CD14-positive monocyte (primary cell): ENCODE measurements at regions of chr2 and their contacts with region 1.

Region 1: GRCh38 chr2:16713011-16713423 is 47.4 kb upstream of the CYRIA start:
- DNase-seq: no peak
- H3K4me3 ChIP-seq: no peak overlapping the region
- H3K4me3 Mint-ChIP-seq: no peak overlapping the region
- H3K27ac ChIP-seq: no peak overlapping the region
- H3K27ac Mint-ChIP-seq: no peak overlapping the region
- H3K4me1 ChIP-seq: peaks cover 40 to 44% of the 10 kb centered on the region in 2 donors
- H3K4me1 Mint-ChIP-seq: peaks cover 34% of the 10 kb centered on the region
- H3K27me3 ChIP-seq: no peaks in the 10 kb centered on the region
- H3K27me3 Mint-ChIP-seq: peaks cover 0 to 2% (median 1%) of the 10 kb centered on the region in 3 donors
- CTCF ChIP-seq: no peak

Region 2: DNA sequence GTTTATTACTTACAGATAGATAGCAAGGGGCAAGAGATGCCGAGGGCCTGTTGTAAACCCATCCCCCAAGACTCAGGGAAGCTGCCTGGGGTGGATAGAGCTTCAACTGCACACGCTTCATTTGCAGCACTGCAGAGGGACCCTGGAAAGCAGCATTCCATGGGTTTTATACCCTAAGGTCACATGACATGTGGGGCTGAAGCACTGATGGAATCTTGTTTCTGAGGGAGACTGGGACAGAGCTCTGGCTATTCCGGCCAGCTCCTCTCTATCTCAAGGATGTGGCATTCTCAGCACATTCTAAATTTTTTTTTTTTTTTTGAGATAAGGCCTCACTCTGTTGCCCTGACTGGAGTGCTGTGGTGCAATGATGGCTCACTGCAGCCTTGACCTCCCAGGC is 472.6 kb before region 1 on chr2:
- intact Hi-C with region 1: no loop called
- DNase-seq: no peak
- H3K4me3 ChIP-seq: no peak overlapping the region
- H3K4me3 Mint-ChIP-seq: no peak overlapping the region
- H3K27ac ChIP-seq: no peak overlapping the region
- H3K27ac Mint-ChIP-seq: no peak overlapping the region
- H3K4me1 ChIP-seq: no peaks in the 10 kb centered on the region
- H3K4me1 Mint-ChIP-seq: no peaks in the 10 kb centered on the region
- H3K27me3 ChIP-seq: no peaks in the 10 kb centered on the region
- H3K27me3 Mint-ChIP-seq: peaks cover 0 to 5% (median 4%) of the 10 kb centered on the region in 3 donors
- CTCF ChIP-seq: no peak

Region 3: DNA sequence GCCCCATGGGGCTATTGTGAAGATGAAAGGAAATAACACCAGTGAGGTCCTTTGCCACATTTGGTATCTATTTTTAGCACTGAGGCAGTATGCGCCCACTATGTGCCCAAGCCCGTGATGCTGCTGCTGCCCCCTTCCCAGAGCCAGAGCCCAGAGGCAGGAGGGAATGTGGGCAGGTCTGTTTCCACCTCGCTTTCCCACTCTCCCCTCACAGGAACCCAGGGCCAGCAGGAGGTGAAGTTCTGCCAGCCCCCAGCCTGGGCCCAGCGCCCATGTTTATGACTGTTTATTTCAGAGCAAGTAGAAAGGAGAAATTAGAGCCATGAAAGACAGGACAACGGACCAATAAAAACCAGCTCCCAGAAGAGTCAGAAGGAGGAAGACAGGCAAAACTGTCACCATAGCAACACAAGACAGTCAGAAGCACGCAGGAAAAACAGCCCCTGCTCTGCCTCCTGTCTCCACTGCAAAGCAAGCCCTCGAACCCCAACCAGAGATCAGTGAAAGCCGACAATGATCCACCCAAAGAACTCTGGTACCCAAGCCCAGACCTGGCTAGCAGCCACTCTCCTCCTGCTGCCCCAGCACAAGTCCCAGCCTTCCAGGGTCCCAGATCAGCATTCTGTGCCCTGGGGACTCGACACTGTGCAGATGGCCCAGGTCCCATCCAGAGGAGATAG is 48.8 kb before region 1 on chr2:
- intact Hi-C with region 1: loop called in 1 of 2 experiments (anchors 5 kb)
- DNase-seq: peak; percentile 87 to 95 (median 94)
- H3K4me3 ChIP-seq: peak overlapping the region; percentile 70 to 89 (median 84)
- H3K4me3 Mint-ChIP-seq: peak overlapping the region; percentile 98 to 99
- H3K27ac ChIP-seq: peak overlapping the region; percentile 90
- H3K27ac Mint-ChIP-seq: peak overlapping the region; percentile 95 to 99 (median 97)
- H3K4me1 ChIP-seq: peaks cover 54 to 66% of the 10 kb centered on the region in 2 donors
- H3K4me1 Mint-ChIP-seq: peaks cover 65% of the 10 kb centered on the region
- H3K27me3 ChIP-seq: no peaks in the 10 kb centered on the region
- H3K27me3 Mint-ChIP-seq: peaks cover 5 to 9% (median 6%) of the 10 kb centered on the region in 3 donors
- CTCF ChIP-seq: no peak

Region 4: DNA sequence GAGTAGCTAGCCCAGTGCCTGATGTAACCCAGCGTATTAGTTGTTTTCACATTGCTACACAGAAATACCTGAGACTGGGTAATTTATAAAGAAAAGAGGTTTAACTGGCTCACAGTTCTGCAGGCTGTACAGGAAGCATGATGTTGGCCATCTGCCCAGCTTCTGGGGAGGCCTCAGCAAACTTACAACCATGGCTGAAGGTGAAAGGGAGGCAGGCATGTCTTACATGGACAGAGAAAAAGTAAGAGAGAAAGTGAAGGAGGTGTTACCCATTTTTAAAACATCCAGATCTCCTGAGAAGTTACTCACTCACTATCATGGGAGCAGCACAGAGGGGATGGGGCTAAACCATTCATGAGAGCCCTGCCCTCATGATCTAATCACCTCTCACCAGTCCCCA is 41.3 kb before region 1 on chr2:
- intact Hi-C with region 1: loop called in 1 of 2 experiments (anchors 5 kb)
- DNase-seq: no peak
- H3K4me3 ChIP-seq: no peak overlapping the region
- H3K4me3 Mint-ChIP-seq: no peak overlapping the region
- H3K27ac ChIP-seq: no peak overlapping the region
- H3K27ac Mint-ChIP-seq: peak overlapping the region in 1 of 7 donors; percentile 69
- H3K4me1 ChIP-seq: peaks cover 10 to 18% of the 10 kb centered on the region in 2 donors
- H3K4me1 Mint-ChIP-seq: peaks cover 17% of the 10 kb centered on the region
- H3K27me3 ChIP-seq: no peaks in the 10 kb centered on the region
- H3K27me3 Mint-ChIP-seq: peaks cover 3 to 7% (median 5%) of the 10 kb centered on the region in 3 donors
- CTCF ChIP-seq: no peak

Region 5: DNA sequence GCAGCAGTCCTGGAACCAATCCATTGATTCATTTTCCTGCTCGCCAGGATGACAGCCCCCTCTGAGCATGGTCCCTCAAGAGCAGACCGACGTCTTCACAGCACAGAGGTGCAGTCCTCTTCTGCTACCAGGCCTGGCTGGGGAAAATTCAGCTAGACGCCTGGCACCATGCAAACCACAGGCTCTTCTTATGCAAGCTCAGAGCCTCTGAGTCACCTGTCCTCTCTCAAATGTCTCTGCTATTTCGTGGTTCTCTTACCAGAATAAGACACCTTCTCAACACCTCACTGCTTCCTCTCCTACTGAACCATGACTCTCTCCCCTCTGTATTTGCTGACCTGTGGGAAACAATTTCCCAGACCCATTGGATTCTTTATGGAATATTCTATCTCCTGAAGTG is 32.4 kb after region 1 on chr2:
- intact Hi-C with region 1: no loop called
- DNase-seq: peak in 2 of 3 donors; percentile 12 to 24
- H3K4me3 ChIP-seq: no peak overlapping the region
- H3K4me3 Mint-ChIP-seq: no peak overlapping the region
- H3K27ac ChIP-seq: no peak overlapping the region
- H3K27ac Mint-ChIP-seq: peak overlapping the region in 1 of 7 donors; percentile 1
- H3K4me1 ChIP-seq: peaks cover 2 to 4% of the 10 kb centered on the region in 2 donors
- H3K4me1 Mint-ChIP-seq: peaks cover 17% of the 10 kb centered on the region
- H3K27me3 ChIP-seq: no peaks in the 10 kb centered on the region
- H3K27me3 Mint-ChIP-seq: peaks cover 0 to 7% (median 2%) of the 10 kb centered on the region in 3 donors
- CTCF ChIP-seq: no peak